ENCODE measurements at regions of chr16 and their contacts with region 1.

Region 1: GRCh38 chr16:67883872-67884261 is 818 bp upstream of the NRN1L start:
- DNase-seq: peak; percentile 68 to 87
- H3K4me3 ChIP-seq: no peak overlapping the region
- H3K4me3 Mint-ChIP-seq: peak overlapping the region; percentile 61
- H3K27ac Mint-ChIP-seq: peak overlapping the region; percentile 96
- H3K4me1 ChIP-seq: peaks cover 43% of the 10 kb centered on the region
- H3K4me1 Mint-ChIP-seq: peaks cover 37% of the 10 kb centered on the region
- H3K27me3 ChIP-seq: no peaks in the 10 kb centered on the region
- H3K27me3 Mint-ChIP-seq: no peaks in the 10 kb centered on the region
- CTCF ChIP-seq: peak; percentile 89 to 92

Region 2: DNA sequence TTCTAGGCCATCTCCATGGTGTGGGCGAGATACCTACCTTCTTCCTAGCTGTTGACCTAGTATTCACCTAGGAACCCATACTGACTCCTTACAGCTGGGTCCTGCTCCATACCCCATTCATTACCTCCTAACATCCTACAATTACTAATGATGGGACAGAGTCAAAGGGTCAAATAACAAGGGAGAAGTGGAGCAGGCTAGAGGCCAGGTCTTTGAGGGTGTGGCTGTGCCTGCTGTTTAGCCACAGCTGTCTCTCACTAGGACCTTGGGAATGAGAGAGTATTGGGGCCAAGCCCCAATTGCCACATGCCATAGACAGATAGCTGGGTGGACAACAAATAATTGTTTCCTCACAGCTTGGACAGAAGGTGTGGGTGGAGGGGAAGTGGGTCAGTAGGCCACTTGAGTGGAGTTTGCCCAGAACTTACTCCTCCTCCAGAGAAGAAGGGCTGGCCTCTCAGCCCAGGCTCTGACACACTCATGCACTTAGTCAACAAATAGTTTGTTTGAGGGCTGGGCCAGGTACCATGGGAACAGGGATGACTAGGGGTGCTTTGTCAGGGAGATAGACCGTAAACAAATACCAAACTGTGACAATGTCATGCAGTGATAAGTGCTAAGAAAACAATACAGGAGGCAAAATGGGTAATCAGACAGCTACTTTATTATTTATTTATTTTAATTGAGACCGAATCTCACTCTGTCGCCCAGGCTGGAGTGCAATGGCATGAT is 26.2 kb before region 1 on chr16:
- CTCF ChIA-PET with region 1: interaction called, 13 read pairs
- POLR2A ChIA-PET with region 1: no interaction called
- intact Hi-C with region 1: no loop called
- DNase-seq: peak; percentile 86 to 91
- H3K4me3 ChIP-seq: no peak overlapping the region
- H3K4me3 Mint-ChIP-seq: peak overlapping the region; percentile 22
- H3K27ac Mint-ChIP-seq: peak overlapping the region; percentile 90
- H3K4me1 ChIP-seq: peaks cover 21% of the 10 kb centered on the region
- H3K4me1 Mint-ChIP-seq: peaks cover 31% of the 10 kb centered on the region
- H3K27me3 ChIP-seq: no peaks in the 10 kb centered on the region
- H3K27me3 Mint-ChIP-seq: no peaks in the 10 kb centered on the region
- CTCF ChIP-seq: no peak

Region 3: DNA sequence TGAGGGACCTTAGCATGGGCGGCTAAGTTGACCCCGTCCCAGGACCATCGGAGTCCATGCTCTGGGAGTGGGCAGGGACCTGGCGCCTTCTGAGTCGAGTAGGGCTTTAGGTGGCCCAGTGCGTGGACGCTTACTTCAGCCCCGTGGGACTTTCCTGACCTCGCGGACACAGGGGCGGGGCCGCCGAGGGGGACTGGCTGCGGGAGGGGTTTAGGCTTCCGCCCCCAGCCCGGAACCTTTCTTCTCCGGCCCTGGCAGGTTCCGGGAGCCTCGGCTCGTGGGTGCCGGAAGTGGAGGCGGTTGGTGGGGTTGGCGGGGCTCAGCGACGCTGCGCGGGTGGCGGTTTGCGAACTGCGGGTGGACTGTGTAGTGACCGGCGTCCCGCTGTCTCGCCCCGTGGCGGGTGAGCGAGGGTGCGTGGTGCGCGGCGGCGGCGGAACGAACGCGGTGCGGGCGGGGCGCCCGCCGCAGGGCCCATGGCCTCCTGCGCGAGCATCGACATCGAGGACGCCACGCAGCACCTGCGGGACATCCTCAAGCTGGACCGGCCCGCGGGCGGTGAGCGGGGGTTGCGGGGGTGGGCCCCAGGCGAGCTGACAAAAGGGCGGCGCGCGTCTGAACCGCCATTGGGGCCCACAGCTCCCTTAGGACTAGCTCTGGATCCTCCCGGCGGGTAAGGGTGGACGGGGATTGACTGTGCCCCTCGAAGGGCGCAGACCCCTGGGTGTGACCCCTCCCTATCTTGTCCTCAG is 10.9 kb before region 1 on chr16 and contains the start of gene EDC4:
- CTCF ChIA-PET with region 1: interaction called, 20 read pairs
- POLR2A ChIA-PET with region 1: no interaction called
- intact Hi-C with region 1: loop called (anchors 1 kb)
- DNase-seq: peak; percentile 87 to 91
- H3K4me3 ChIP-seq: peak within 1 kb of the TSS; percentile 93
- H3K4me3 Mint-ChIP-seq: peak within 1 kb of the TSS; percentile 90
- H3K27ac Mint-ChIP-seq: peak within 1 kb of the TSS; percentile 87
- H3K4me1 ChIP-seq: peaks cover 7% of the 10 kb centered on the region; the same call in 1 of the 2 replicates
- H3K4me1 Mint-ChIP-seq: peaks cover 20% of the 10 kb centered on the region
- H3K27me3 ChIP-seq: no peaks in the 10 kb centered on the region
- H3K27me3 Mint-ChIP-seq: no peaks in the 10 kb centered on the region
- CTCF ChIP-seq: no peak
- total RNA-seq, gene EDC4: 124 and 139 TPM in 2 replicates

Region 4: DNA sequence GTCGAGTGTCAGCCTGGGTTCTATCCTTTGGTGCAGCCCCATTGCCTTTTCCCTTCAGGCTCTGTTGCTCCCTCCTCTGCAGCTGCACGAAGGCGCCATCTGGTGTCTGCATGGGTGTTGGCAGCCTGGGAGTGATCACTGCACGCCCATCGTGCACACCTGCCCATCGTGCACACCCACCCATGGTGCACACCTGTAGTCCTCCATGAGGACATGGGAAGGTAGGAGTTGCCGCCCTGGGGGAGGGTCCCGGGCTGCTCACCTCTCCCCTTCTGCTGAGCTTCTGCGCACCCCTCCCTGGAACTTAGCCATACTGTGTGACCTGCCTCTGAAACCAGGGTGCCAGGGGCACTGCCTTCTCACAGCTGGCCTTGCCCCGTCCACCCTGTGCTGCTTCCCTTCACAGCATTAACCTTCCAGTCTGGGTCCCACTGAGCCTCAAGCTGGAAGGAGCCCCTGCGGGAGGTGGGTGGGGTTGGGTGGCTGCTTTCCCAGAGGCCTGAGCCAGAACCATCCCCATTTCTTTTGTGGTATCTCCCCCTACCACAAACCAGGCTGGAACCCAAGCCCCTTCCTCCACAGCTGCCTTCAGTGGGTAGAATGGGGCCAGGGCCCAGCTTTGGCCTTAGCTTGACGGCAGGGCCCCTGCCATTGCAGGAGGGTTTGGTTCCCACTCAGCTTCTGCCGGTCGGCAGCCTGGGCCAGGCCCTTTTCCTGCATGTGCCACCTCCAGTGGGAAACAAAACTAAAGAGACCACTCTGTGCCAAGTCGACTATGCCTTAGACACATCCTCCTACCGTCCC is 44.9 kb after region 1 on chr16:
- CTCF ChIA-PET with region 1: interaction called, 47 read pairs
- POLR2A ChIA-PET with region 1: no interaction called
- intact Hi-C with region 1: loop called (anchors 1 kb)
- DNase-seq: peak; percentile 85 to 88
- H3K4me3 ChIP-seq: no peak overlapping the region
- H3K4me3 Mint-ChIP-seq: no peak overlapping the region
- H3K27ac Mint-ChIP-seq: no peak overlapping the region
- H3K4me1 ChIP-seq: peaks cover under 1% of the 10 kb centered on the region; the same call in 1 of the 2 replicates
- H3K4me1 Mint-ChIP-seq: peaks cover 1% of the 10 kb centered on the region
- H3K27me3 ChIP-seq: no peaks in the 10 kb centered on the region
- H3K27me3 Mint-ChIP-seq: no peaks in the 10 kb centered on the region
- CTCF ChIP-seq: peak; percentile 82 to 98